AG04450 (cell line): ENCODE measurements at regions of chr6 and their contacts with region 1.

Region 1: GRCh38 chr6:135423649-135424128 is 73.9 kb downstream of the AHI1 start:
- DNase-seq: peak; percentile 8
- H3K4me3 ChIP-seq: no peak overlapping the region
- H3K27ac ChIP-seq: no peak overlapping the region
- H3K27me3 ChIP-seq: no peaks in the 10 kb centered on the region
- CTCF ChIP-seq: peak; percentile 74

Region 2: DNA sequence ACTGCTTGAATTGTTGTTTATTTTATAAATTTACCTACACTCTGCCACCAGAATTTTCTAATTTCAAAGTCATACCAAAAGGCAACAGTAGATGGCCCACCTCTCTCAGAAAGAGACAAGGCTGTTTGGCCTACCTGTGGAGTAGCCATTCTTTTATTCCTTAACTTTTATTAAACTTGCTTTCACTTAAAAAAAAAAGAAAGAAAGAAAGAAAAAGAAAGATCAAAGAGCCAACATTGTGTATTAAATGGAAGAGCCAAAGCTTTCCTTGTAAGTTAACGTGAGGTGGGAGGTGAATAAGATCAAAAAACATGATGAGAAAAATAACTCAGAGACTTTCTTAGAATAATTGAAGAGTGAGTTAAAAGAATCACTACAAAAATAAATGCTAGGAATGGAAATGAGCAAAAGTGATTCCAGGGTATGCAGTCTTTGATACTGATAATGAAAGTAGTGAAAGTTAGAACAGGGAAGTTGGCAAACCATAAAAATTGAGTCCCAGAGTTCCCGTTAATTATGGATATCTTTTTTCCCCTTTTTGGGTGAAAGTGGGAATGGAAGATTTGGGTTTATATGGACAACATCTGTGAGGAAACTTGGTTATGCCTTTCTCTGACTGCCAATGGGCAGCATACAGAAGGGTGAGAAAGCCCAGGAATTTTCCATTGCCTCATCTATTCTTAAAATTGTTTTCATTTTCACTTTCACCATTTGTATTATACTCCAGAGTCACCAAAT is 278.5 kb before region 1 on chr6:
- CTCF ChIA-PET with region 1: interaction called, 77 read pairs
- POLR2A ChIA-PET with region 1: no interaction called
- DNase-seq: no peak
- H3K4me3 ChIP-seq: no peak overlapping the region
- H3K27ac ChIP-seq: no peak overlapping the region
- H3K27me3 ChIP-seq: peaks cover 6% of the 10 kb centered on the region
- CTCF ChIP-seq: peak; percentile 71

Region 3: GRCh38 chr6:135346747-135347146 is 76.9 kb before region 1 on chr6:
- CTCF ChIA-PET with region 1: no interaction called
- POLR2A ChIA-PET with region 1: no interaction called
- DNase-seq: no peak
- H3K4me3 ChIP-seq: no peak overlapping the region
- H3K27ac ChIP-seq: no peak overlapping the region
- H3K27me3 ChIP-seq: no peaks in the 10 kb centered on the region
- CTCF ChIP-seq: no peak

Region 4: DNA sequence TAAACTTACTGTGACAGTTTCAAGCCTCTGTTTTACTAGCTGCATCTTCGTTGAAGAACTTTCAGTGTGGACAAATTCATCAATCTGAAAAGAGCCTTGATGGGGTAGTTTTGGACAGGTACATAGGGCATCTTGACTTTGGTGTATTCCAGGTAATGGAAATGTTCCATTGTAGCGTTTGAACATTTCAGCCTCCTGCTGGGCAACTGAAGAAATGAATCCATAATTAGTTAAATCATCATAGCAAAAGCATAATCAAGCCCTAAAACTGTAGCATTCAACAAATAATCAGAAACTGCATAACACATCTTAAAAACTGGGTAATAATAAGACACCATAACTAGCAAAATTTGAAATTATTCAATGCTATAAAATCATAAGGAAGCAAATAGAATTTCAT is 12.3 kb before region 1 on chr6:
- CTCF ChIA-PET with region 1: interaction called, 19 read pairs
- POLR2A ChIA-PET with region 1: no interaction called
- DNase-seq: no peak
- H3K4me3 ChIP-seq: no peak overlapping the region
- H3K27ac ChIP-seq: no peak overlapping the region
- H3K27me3 ChIP-seq: no peaks in the 10 kb centered on the region
- CTCF ChIP-seq: peak; percentile 46